Thyroid gland (tissue), 4 donors: ENCODE measurements at regions of chr3 and their contacts with region 1.

Region 1: DNA sequence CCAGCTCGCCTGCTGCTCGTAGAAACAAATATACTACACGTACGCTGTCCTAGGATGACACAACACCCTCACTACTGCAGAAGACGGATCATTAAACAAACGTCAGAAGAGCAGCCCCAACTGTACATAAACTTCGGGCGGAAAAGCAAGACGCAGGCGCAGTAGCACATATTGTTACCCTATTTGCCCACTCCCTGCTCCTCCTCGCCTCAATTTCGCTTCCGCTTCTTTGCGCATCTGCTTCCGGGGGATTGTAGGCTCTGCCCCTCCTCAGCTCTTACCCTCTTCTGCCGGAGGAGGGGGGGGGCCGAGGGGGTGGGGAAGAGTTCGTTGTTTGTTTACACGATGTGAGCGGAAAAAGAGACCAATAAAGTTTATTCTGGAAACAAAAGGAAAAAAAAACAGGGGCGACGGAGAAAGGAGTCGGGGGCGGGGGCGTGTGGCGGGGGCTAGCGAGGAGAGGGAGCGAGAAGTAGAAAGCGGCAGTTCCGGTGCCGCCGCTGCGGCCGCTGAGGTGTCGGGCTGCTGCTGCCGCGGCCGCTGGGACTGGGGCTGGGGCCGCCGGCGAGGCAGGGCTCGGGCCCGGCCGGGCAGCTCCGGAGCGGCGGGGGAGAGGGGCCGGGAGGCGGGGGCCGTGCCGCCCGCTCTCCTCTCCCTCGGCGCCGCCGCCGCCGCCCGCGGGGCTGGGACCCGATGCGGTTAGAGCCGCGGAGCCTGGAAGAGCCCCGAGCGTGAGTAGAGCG is at the start of gene PIK3CA:
- DNase-seq: peak; percentile 95 to 97
- H3K4me3 ChIP-seq: peak within 1 kb of the TSS; percentile 12 to 95 (median 94)
- H3K27ac ChIP-seq: peak within 1 kb of the TSS; percentile 94 to 96 (median 95)
- H3K4me1 ChIP-seq: peaks cover 0 to 8% of the 10 kb centered on the region in 2 donors
- H3K27me3 ChIP-seq: no peaks in the 10 kb centered on the region
- CTCF ChIP-seq: peak in 1 of 6 experiments; percentile 2
- POLR2A ChIP-seq: peak; percentile 55 to 91
- total RNA-seq, gene PIK3CA: 19.0 to 39.8 (median 22.4) TPM

Region 2: DNA sequence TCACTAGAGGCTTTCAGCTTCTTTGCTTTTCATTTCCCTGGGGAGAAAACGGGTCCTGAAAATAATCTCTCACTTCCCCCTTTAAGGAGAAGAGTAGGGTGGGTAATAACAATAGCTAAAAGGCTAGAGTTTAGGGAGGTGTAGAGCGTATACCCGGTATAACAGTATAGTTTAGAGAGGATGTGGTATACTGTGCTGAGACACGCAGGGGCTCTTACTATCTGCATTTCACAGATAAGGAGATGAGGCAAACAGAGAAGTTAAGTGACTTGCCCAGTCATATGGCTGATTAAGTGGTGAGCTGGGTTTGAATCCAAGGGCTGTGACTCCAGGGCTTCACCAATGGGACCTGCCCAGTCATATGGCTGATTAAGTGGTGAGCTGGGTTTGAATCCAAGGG is 117.8 kb after region 1 on chr3:
- intact Hi-C with region 1: loop called (anchors 5 kb)
- DNase-seq: no peak
- H3K4me3 ChIP-seq: no peak overlapping the region
- H3K27ac ChIP-seq: no peak overlapping the region
- H3K4me1 ChIP-seq: peaks cover 0 to 4% of the 10 kb centered on the region in 2 donors
- H3K27me3 ChIP-seq: no peaks in the 10 kb centered on the region
- CTCF ChIP-seq: no peak
- POLR2A ChIP-seq: no peak